ENCODE measurements at regions of chr15 and their contacts with region 1.

Region 1: DNA sequence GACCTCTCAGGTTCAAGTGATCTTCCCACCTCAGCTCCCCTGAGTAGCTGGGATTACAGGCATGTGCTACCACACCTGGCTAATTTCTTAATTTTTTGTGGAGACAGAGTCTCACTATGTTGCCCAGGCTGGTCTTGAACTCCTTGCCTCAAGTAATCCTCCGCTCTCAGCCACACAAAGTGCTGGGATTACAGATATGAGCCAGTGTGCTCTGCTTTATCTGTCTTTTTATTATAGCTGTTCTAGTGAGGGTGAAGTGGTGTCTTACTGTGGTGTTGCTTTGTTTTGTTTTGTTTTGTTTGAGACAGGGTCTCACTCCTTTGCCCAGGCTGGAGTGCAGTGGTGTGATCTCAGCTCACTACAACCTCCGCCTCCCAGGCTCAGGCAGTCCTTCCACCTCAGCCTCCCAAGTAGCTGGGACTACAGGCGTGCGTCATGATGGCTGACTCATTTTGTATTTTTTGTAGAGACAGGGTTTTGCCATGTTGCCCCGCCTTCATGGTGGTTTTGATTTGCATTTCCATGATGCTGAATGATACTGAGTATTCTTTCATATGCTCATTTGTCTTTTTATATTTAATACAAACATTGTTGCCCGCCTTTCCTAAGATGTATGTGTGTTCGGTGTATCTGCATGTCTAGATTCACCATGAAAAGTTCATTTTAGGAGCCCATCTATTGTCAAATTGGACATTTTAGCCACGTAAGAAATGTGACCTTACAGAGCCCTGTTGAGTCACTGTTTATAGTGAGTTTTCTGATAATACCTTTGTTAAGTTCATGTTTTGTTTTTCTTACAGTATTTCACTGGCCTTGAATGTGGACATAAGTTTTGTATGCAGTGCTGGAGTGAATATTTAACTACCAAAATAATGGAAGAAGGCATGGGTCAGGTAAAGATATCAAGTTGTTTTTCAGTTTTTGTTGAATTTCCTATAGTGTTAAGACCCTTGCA is 80.6 kb downstream of the ARIH1 start:
- DNase-seq: no peak
- H3K4me3 ChIP-seq: no peak overlapping the region
- H3K27ac ChIP-seq: no peak overlapping the region
- H3K4me1 ChIP-seq: no peaks in the 10 kb centered on the region
- H3K27me3 ChIP-seq: no peaks in the 10 kb centered on the region
- CTCF ChIP-seq: no peak
- POLR2A ChIP-seq: no peak

Region 2: DNA sequence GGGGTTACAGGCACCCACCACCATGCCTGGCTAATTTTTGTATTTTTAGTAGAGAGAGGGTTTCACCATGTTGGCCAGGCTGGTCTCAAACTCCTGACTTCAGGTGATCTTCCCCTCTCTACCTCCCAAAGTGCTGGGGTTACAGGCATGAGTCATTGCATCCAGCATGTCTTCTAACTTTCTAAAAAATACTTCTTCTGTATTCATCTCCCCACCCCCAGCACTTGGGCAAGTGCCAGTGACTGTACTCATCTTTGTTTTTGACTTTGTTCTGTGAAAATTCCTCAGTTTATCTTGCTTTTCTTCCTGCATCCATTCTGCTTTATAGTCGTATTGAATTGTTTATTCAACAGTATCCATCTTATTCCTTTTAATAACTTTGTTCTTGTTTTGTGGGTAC is 33.1 kb before region 1 on chr15:
- intact Hi-C with region 1: no loop called
- DNase-seq: no peak
- H3K4me3 ChIP-seq: no peak overlapping the region
- H3K27ac ChIP-seq: no peak overlapping the region
- H3K4me1 ChIP-seq: no peaks in the 10 kb centered on the region
- H3K27me3 ChIP-seq: no peaks in the 10 kb centered on the region
- CTCF ChIP-seq: no peak
- POLR2A ChIP-seq: no peak

Region 3: DNA sequence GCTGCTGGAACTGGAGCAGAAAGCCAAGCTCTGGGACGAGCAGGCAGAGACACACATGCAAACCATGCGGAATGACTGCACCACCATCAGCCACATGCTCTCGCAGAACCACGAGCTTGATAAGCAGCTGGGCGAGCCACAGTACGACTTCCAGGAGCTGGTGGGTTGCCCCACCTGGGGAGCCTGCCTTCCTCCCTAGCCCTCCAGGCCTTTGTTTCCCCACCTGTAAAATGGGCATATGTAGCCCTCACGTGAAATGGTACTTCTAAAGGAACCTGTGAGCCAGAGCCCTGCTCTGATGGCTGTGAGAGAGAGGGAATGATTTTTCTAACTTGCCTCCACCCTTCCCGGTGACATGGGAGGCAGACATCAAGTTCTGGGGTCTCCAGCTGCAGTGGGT is 55.1 kb after region 1 on chr15:
- intact Hi-C with region 1: loop called (anchors 2 kb)
- DNase-seq: no peak
- H3K4me3 ChIP-seq: no peak overlapping the region
- H3K27ac ChIP-seq: no peak overlapping the region
- H3K4me1 ChIP-seq: no peaks in the 10 kb centered on the region
- H3K27me3 ChIP-seq: no peaks in the 10 kb centered on the region
- CTCF ChIP-seq: no peak
- POLR2A ChIP-seq: no peak

Measured in breast epithelium (tissue), 4 donors.